OCI-LY7 (cell line): ENCODE measurements at regions of chr16 and their contacts with region 1.

Region 1: GRCh38 chr16:89720813-89721545 is at the starts of genes VPS9D1 and ZNF276:
- DNase-seq: peak; percentile 80
- H3K4me3 ChIP-seq: peak within 1 kb of the TSS; percentile 89
- H3K27ac ChIP-seq: peak within 1 kb of the TSS; percentile 57
- H3K4me1 ChIP-seq: peaks cover 19% of the 10 kb centered on the region
- CTCF ChIP-seq: no peak
- total RNA-seq, gene VPS9D1: 2.0 and 3.1 TPM in 2 replicates
- total RNA-seq, gene ZNF276: 27.4 and 31.0 TPM in 2 replicates

Region 2: GRCh38 chr16:89633064-89633631 is 87.8 kb before region 1 on chr16:
- CTCF ChIA-PET with region 1: no interaction called
- POLR2A ChIA-PET with region 1: no interaction called
- intact Hi-C with region 1: no loop called
- DNase-seq: no peak
- H3K4me3 ChIP-seq: no peak overlapping the region
- H3K27ac ChIP-seq: no peak overlapping the region
- H3K4me1 ChIP-seq: no peaks in the 10 kb centered on the region
- CTCF ChIP-seq: no peak

Region 3: GRCh38 chr16:89791278-89791995 is 70.5 kb after region 1 on chr16:
- CTCF ChIA-PET with region 1: no interaction called
- POLR2A ChIA-PET with region 1: no interaction called
- intact Hi-C with region 1: no loop called
- DNase-seq: no peak
- H3K4me3 ChIP-seq: no peak overlapping the region
- H3K27ac ChIP-seq: no peak overlapping the region
- H3K4me1 ChIP-seq: no peaks in the 10 kb centered on the region
- CTCF ChIP-seq: no peak

Region 4: DNA sequence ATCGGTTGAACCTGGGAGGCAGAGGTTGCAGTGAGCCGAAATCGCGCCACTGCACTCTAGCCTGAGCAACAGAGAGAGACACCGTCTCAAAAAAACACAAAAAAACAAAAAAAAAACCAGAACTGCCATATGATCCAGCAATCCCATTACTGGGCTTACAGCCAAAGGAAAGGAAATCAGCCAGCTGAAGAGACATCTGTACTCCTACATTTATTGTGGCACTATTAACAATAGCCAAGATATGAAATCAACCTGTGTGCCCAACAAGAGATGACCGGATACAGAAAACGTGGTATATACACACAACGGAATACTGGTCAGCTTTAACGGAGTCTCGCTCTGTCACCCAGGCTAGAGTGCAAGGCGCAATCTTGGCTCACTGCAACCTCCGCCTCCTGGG is 80.8 kb after region 1 on chr16:
- CTCF ChIA-PET with region 1: no interaction called
- POLR2A ChIA-PET with region 1: no interaction called
- intact Hi-C with region 1: no loop called
- DNase-seq: no peak
- H3K4me3 ChIP-seq: no peak overlapping the region
- H3K27ac ChIP-seq: no peak overlapping the region
- H3K4me1 ChIP-seq: no peaks in the 10 kb centered on the region
- CTCF ChIP-seq: no peak

Region 5: DNA sequence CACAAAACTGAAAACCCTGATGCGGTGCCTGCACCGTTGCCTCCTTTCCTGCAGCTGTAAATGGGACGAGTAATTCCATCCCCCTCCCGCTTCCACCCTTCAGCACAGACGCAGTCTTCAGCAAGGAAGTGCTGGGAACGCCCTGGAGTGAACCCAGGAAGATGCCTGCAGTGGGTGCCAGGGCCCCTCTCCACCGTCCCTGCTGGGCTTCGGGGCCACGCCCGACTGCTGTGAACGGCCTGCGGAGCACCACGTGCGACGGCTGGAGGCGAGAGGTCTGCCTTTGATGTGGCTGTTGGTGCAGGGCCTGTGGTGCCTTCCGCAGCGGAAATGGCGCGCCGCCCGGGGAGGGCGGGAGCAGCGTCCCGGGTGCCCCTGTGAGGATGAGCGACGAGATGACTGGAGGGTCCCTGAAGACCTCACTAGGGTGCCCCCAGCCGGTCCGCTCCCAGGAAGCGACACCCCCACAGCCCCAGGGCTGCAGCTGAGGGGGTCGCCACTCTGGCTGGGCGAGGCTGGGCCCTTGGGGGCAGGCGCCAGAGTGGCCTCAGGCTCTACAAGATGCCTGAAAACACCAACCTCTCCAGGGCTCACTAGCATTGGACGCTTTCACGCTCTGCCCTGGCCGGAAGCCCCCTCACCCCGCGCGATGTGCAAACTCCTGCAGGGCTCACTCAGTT is 196.9 kb after region 1 on chr16:
- CTCF ChIA-PET with region 1: no interaction called
- POLR2A ChIA-PET with region 1: no interaction called
- intact Hi-C with region 1: loop called (anchors 5 kb)
- DNase-seq: peak; percentile 96
- H3K4me3 ChIP-seq: peak overlapping the region; percentile 58
- H3K27ac ChIP-seq: peak overlapping the region; percentile 90
- H3K4me1 ChIP-seq: peaks cover 52% of the 10 kb centered on the region
- CTCF ChIP-seq: no peak